CD8-positive, alpha-beta T cell (primary cell): ENCODE measurements at regions of chr5 and their contacts with region 1.

Region 1: DNA sequence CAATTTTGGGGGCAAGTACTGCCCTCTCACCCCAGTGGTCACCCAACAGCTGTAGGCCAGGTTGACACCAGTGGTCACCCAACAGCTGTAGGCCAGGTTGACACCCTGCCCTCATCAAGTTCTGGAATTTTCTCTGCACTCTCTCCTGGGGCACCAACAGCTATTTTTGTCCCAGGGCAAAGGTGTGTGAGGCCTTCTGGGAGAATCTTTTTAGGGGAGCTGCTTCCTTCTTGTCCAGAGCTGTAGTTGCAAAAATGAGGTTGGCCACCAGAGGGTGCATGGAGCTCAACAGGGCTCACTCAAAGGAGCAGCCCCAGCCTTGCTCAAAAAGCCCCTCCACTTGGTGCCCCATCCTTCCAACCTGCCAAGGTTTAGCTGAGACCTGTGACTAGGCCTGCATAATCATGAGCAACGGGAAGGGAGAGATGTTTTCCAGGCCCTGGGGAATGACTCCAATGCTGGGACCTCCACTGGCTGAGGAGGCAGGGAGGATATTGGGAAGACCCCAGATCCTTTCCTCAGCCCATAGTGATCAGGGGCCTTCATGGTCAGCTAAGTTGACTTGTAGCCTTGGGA is 10.6 kb upstream of the P4HA2 start:
- DNase-seq: peak; percentile 45 to 78 (median 70)
- ATAC-seq: peak; percentile 89
- H3K4me3 ChIP-seq: no peak overlapping the region
- H3K4me3 Mint-ChIP-seq: no peak overlapping the region
- H3K27ac ChIP-seq: no peak overlapping the region
- H3K27ac Mint-ChIP-seq: no peak overlapping the region
- H3K4me1 ChIP-seq: no peaks in the 10 kb centered on the region
- H3K4me1 Mint-ChIP-seq: no peaks in the 10 kb centered on the region
- H3K27me3 ChIP-seq: no peaks in the 10 kb centered on the region
- H3K27me3 Mint-ChIP-seq: no peaks in the 10 kb centered on the region
- CTCF ChIP-seq: peak; percentile 73

Region 2: DNA sequence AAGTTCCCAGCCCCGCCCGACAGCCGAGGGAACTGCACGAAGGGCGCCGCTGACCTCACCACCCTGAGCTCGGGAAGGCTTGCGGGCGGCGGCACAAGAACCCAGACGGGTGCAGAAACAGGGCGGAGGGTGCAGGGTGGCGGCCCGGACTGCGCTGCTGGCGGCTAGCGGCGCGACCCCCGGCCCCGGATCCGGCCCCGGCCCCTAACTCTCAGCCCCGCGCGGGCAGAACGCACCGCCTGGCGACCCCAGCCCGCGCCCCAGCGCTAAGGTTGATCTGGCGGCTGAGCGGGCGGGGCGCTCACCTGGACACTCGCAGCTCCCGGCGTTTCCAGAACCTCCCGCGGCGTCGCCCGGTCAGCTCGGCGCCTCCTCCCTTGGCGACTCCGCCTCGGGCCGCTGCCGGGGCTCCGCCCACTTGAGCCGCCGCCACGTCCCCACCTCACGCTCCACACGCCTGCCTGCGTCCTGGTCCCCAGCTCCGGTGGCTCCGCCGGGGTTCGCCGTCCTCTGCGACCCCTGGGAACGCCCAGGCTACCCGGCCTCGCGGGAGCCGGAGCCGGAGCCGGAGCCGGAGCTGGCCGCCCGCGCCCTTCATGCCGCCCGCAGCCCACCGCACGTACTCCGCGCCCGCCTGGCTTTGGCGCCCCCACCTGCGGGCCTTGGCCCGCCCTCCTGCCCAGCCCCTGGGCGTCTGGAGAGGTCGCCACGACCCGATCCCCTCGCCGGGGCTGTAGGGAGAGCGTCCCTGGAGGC is 10.6 kb before region 1 on chr5 and contains the start of gene P4HA2:
- CTCF ChIA-PET with region 1: interaction called, 18 read pairs
- POLR2A ChIA-PET with region 1: no interaction called
- intact Hi-C with region 1: no loop called
- DNase-seq: peak in 6 of 9 experiments; percentile 13 to 53 (median 26)
- ATAC-seq: peak; percentile 36
- H3K4me3 ChIP-seq: peak within 1 kb of the TSS; percentile 12 to 27
- H3K4me3 Mint-ChIP-seq: peak within 1 kb of the TSS; percentile 66
- H3K27ac ChIP-seq: no peak within 1 kb of the TSS
- H3K27ac Mint-ChIP-seq: no peak within 1 kb of the TSS
- H3K4me1 ChIP-seq: peaks cover 8% of the 10 kb centered on the region
- H3K4me1 Mint-ChIP-seq: peaks cover 17% of the 10 kb centered on the region
- H3K27me3 ChIP-seq: peaks cover 3 to 5% of the 10 kb centered on the region in 2 experiments
- H3K27me3 Mint-ChIP-seq: peaks cover 25% of the 10 kb centered on the region
- CTCF ChIP-seq: no peak
- total RNA-seq, gene P4HA2: not detected

Region 3: DNA sequence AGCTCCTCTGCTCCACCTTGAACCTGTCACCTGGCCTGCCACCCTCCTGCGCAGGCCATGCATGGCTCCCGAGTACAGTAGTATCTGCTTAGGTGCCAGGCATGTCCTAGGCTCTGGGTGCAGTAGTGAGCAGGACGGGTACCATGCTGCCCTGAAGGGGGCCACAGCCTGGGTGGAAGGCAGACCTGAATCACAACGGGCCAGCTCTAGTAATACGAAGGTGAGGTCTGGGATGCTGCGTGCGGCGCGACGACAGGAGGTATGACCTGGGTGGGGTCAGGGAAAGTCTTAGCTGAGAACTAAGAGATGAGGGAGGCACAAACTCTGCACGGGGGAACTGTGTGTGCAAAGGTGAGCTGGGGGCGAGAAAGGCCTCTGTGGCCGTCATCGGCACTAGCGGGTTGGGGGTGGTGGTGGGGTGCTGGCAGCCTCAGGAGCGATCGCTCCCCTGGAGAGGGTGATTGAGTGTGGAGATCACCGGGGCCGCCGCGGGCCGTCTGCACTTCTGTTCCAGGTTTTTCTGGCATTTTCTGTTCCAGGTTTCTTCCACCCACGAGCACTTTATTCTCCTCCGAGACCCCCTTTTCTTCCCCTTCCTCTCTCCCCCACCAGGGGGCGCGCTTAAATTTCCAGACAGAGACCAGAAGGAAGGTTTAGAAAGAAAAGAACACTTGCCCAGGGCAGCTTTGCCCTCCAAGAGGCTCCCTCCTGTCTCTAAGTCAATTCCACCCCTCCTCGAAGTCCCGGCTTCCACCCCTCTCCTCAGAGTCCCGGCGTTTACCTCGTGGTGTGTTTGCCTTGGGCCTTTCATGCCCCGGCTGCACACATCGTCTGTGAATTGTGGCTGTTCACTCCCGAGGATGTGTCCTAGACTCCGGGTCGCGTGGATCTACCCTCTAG is 34.3 kb after region 1 on chr5:
- CTCF ChIA-PET with region 1: interaction called, 14 read pairs
- POLR2A ChIA-PET with region 1: no interaction called
- intact Hi-C with region 1: no loop called
- DNase-seq: peak; percentile 31 to 79 (median 62)
- ATAC-seq: peak; percentile 49
- H3K4me3 ChIP-seq: no peak overlapping the region
- H3K4me3 Mint-ChIP-seq: no peak overlapping the region
- H3K27ac ChIP-seq: no peak overlapping the region
- H3K27ac Mint-ChIP-seq: no peak overlapping the region
- H3K4me1 ChIP-seq: peaks cover 4% of the 10 kb centered on the region
- H3K4me1 Mint-ChIP-seq: peaks cover 3% of the 10 kb centered on the region
- H3K27me3 ChIP-seq: peaks cover 0 to 2% of the 10 kb centered on the region in 2 experiments
- H3K27me3 Mint-ChIP-seq: peaks cover 17% of the 10 kb centered on the region
- CTCF ChIP-seq: peak; percentile 83